ENCODE measurements at regions of chr11 and their contacts with region 1.

Region 1: DNA sequence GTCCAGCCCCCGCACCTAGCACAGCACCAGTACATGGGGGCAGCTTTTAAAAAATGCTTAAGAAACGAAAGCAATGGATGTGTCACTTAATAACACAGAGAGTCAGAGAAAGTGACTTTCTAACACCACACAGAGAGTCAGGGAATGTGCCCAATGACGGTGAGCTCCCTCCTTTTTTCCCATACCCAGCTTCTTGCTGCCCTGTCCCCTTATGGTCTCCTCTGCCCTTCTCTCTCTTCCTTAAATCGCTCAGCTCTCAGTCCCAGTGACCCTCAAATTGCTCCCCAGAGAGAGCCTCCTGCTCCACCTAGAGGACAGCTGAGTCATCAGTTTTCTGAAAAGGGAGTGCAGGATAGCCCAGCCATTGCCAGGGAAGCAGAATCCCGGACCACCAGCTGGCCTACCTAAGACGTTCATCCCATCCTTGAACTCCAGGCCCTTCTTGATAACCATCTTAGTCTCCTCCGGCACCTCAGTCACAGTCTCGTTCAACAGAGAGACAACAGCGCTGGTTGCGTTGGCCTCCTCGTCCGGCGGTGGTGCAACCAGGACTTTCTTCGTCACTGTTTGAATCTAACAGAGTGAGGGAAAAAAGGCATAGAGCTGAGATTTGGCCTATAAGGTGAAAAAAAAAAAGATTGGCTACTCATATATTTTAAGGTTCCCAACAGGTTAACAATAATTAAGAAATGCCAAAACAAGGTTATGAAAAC is 113.5 kb downstream of the SLC1A2 start:
- DNase-seq: peak in 4 of 5 donors; percentile 18 to 64 (median 48)
- H3K4me3 ChIP-seq: no peak overlapping the region
- H3K4me3 Mint-ChIP-seq: peak overlapping the region in 6 of 7 donors; percentile 58 to 75 (median 73)
- H3K27ac ChIP-seq: no peak overlapping the region
- H3K27ac Mint-ChIP-seq: peak overlapping the region; percentile 8 to 96 (median 89)
- H3K4me1 ChIP-seq: peaks cover 9% of the 10 kb centered on the region
- H3K4me1 Mint-ChIP-seq: peaks cover 16 to 22% (median 18%) of the 10 kb centered on the region in 3 donors
- H3K27me3 ChIP-seq: no peaks in the 10 kb centered on the region
- H3K27me3 Mint-ChIP-seq: peaks cover 0 to 2% of the 10 kb centered on the region in 2 donors

Region 2: DNA sequence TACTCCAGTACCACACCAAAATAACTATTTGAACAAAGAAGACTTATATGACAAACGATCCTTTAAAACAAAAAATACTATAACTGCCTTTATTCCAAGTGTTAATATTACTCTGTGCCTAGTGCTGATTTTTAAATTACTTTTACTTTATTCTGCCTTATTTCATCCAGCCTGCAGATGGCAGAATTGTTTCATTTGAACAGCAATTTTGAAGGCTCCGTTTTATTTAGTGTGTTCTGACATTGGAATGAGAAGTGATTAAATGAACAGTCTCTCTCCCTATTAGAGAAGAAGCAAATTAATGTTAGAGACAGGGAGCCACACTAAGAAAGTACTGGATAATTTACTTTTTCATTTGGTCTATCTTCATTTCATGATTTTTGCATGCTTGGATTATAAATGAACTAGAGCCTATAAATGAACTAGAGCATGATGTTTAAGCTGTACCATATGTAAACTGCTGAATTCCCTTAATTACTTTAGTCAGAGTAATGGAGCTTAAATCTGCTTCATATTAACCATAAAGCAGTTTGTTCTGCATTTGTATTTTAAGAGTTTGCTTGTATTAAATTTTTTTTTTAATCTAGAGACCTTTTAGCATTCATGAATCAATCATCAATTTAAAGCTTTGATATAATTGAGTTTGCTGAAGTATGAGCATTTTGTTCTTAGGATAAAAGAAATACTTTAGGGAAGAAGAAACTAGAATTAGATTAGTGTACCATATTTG is 379.6 kb before region 1 on chr11:
- CTCF ChIA-PET with region 1: interaction called, 32 read pairs
- POLR2A ChIA-PET with region 1: no interaction called
- DNase-seq: peak in 2 of 5 donors; percentile 36 to 45
- H3K4me3 ChIP-seq: no peak overlapping the region
- H3K4me3 Mint-ChIP-seq: peak overlapping the region in 1 of 7 donors; percentile 15
- H3K27ac ChIP-seq: no peak overlapping the region
- H3K27ac Mint-ChIP-seq: peak overlapping the region in 2 of 8 donors; percentile 0 to 41
- H3K4me1 ChIP-seq: peaks cover 3% of the 10 kb centered on the region
- H3K4me1 Mint-ChIP-seq: peaks cover 13 to 29% (median 24%) of the 10 kb centered on the region in 3 donors
- H3K27me3 ChIP-seq: no peaks in the 10 kb centered on the region
- H3K27me3 Mint-ChIP-seq: no peaks in the 10 kb centered on the region

Region 3: GRCh38 chr11:35173011-35173511 is 132.8 kb before region 1 on chr11:
- CTCF ChIA-PET with region 1: interaction called, 15 read pairs
- POLR2A ChIA-PET with region 1: no interaction called
- DNase-seq: no peak
- H3K4me3 ChIP-seq: peak overlapping the region; percentile 16
- H3K4me3 Mint-ChIP-seq: peak overlapping the region; percentile 49 to 77 (median 69)
- H3K27ac ChIP-seq: peak overlapping the region; percentile 52
- H3K27ac Mint-ChIP-seq: peak overlapping the region; percentile 96 to 100 (median 100)
- H3K4me1 ChIP-seq: peaks cover 94% of the 10 kb centered on the region
- H3K4me1 Mint-ChIP-seq: peaks cover 94 to 95% (median 95%) of the 10 kb centered on the region in 3 donors
- H3K27me3 ChIP-seq: no peaks in the 10 kb centered on the region
- H3K27me3 Mint-ChIP-seq: peaks cover 0 to 2% of the 10 kb centered on the region in 2 donors

Region 4: DNA sequence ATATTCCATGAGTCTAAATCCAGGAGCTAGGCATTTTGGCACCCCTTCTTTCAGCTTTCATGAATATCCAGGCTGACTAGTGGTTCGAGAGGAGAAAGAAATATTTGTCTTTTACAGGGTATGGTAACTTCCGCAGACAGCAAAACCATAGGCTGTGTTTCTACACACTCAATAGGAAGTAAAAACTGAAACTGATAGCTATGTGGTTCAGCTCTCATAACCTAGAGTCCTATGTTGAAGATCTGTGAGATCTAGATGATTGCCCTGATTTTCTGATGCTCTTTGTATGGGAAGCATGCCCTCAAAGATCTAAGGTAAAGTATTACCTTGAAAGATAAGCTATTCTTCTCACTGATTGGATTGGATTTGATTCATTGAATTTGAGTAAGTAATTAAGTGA is 48.5 kb before region 1 on chr11:
- CTCF ChIA-PET with region 1: interaction called, 13 read pairs
- POLR2A ChIA-PET with region 1: no interaction called
- DNase-seq: peak in 2 of 5 donors; percentile 28 to 48
- H3K4me3 ChIP-seq: peak overlapping the region; percentile 16
- H3K4me3 Mint-ChIP-seq: peak overlapping the region in 6 of 7 donors; percentile 19 to 74 (median 60)
- H3K27ac ChIP-seq: no peak overlapping the region
- H3K27ac Mint-ChIP-seq: peak overlapping the region; percentile 71 to 98 (median 95)
- H3K4me1 ChIP-seq: peaks cover 25% of the 10 kb centered on the region
- H3K4me1 Mint-ChIP-seq: peaks cover 31 to 35% (median 32%) of the 10 kb centered on the region in 3 donors
- H3K27me3 ChIP-seq: no peaks in the 10 kb centered on the region
- H3K27me3 Mint-ChIP-seq: no peaks in the 10 kb centered on the region

Region 5: DNA sequence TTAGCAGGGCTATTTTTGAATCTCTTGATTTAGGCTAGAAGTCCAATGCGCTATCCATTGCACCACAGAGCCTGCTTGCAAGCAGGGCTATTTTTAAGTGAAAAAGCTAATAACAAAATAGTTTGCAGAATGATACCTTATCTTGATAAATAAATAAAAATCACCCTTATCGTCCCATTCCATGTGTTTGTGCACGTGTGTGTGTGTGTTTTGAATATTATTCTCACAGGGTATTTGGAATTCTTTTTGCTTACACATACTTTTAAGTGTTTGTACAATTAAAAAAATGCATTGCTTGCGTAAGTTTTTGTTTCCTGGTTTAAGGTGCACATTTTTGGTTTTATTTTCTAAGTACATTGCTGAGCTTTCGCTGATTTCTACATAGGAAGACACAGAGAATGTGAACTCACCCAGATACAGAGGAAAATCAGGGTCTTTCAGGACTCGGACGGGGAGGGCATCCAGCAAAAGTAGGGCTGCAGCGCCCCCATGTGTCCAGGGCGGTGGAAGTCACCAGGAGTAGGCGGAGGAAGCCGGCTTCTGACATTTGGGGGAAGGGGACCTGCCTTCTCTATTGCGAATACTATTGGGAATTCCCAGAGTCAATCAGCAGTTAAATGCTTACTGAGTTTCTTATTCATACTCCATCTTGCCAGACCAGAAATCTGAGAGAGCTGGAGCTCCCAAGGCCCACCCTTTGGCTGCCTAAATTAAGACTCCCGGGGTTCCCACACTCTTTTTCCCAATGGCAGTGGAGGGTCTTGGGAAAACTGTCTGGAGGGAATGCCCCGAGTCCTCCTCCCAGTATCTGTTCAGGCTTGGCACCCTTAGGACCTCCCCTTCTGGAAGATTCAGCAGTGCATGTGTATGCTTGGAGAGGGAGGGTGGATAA is 86.3 kb after region 1 on chr11:
- CTCF ChIA-PET with region 1: interaction called, 12 read pairs
- POLR2A ChIA-PET with region 1: no interaction called
- DNase-seq: peak; percentile 64 to 83 (median 77)
- H3K4me3 ChIP-seq: no peak overlapping the region
- H3K4me3 Mint-ChIP-seq: peak overlapping the region in 4 of 7 donors; percentile 22 to 51 (median 30)
- H3K27ac ChIP-seq: no peak overlapping the region
- H3K27ac Mint-ChIP-seq: peak overlapping the region in 3 of 8 donors; percentile 5 to 39 (median 37)
- H3K4me1 ChIP-seq: peaks cover 16% of the 10 kb centered on the region
- H3K4me1 Mint-ChIP-seq: peaks cover 9 to 24% (median 15%) of the 10 kb centered on the region in 3 donors
- H3K27me3 ChIP-seq: no peaks in the 10 kb centered on the region
- H3K27me3 Mint-ChIP-seq: peaks cover 4 to 7% of the 10 kb centered on the region in 2 donors

Region 6: DNA sequence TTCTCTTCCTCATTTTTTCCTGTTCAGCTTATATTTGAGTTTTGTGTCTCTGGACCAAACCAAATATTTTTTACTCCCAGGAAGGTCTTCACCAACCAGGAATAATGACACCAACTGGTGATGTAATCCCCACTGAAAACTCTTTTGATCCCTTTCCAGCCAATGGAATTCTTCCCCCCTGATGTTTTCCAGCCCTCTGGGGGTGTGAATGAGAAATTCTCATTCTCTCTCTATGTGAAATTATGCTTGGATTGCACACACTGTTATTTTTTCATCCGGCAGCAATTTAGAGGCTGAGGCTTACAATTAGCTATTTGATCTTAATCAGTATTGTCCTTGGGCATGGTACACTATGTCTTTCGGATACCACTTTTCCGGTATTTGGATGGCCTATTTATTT is 153.0 kb after region 1 on chr11:
- CTCF ChIA-PET with region 1: no interaction called
- POLR2A ChIA-PET with region 1: no interaction called
- DNase-seq: no peak
- H3K4me3 ChIP-seq: no peak overlapping the region
- H3K4me3 Mint-ChIP-seq: no peak overlapping the region
- H3K27ac ChIP-seq: no peak overlapping the region
- H3K27ac Mint-ChIP-seq: no peak overlapping the region
- H3K4me1 ChIP-seq: no peaks in the 10 kb centered on the region
- H3K4me1 Mint-ChIP-seq: no peaks in the 10 kb centered on the region
- H3K27me3 ChIP-seq: no peaks in the 10 kb centered on the region
- H3K27me3 Mint-ChIP-seq: peaks cover 6 to 55% of the 10 kb centered on the region in 2 donors

Region 7: GRCh38 chr11:35893796-35894475 is 588.1 kb after region 1 on chr11:
- CTCF ChIA-PET with region 1: no interaction called
- POLR2A ChIA-PET with region 1: no interaction called
- DNase-seq: no peak
- H3K4me3 ChIP-seq: no peak overlapping the region
- H3K4me3 Mint-ChIP-seq: no peak overlapping the region
- H3K27ac ChIP-seq: no peak overlapping the region
- H3K27ac Mint-ChIP-seq: no peak overlapping the region
- H3K4me1 ChIP-seq: no peaks in the 10 kb centered on the region
- H3K4me1 Mint-ChIP-seq: no peaks in the 10 kb centered on the region
- H3K27me3 ChIP-seq: no peaks in the 10 kb centered on the region
- H3K27me3 Mint-ChIP-seq: peaks cover 14 to 38% of the 10 kb centered on the region in 2 donors